ENCODE measurements at regions of chr3 and their contacts with region 1.

Region 1: GRCh38 chr3:58177747-58178527 is 32.8 kb downstream of the DNASE1L3 start:
- DNase-seq: peak; percentile 85 to 93
- H3K4me3 ChIP-seq: peak overlapping the region; percentile 39 to 56
- H3K27ac ChIP-seq: peak overlapping the region in 1 of 2 donors; percentile 2
- H3K4me1 ChIP-seq: peaks cover 0 to 35% (median 26%) of the 10 kb centered on the region in 4 donors
- H3K27me3 ChIP-seq: no peaks in the 10 kb centered on the region
- CTCF ChIP-seq: peak; percentile 91 to 93

Region 2: DNA sequence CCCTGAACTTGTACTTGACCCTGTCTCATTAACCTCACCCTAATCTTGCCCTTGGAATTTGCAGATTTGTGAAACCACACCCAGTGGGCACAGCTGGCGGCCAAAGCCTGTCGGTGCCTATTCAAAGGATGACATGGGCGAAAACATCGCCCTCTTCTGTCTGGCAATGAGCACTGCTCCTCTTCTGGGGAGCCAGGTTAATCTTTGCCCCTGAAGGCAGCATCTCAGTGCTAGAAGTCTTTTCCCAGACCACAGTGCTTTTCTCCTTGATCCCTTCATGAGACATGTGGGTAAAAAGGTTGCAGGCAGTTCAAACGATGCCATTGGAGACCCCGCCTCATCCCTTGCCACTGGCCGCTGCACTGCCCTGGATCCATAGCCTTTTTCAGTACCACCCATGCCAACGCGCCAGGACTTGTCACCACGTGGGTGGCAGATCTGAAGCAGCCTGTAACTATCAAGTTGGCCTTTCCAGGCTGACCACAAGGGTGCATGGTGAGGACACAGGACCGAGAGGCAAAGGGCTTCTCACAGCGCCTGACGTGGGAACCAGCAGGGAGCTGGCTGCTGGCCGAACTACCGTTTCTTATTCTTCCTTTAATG is 39.4 kb after region 1 on chr3:
- intact Hi-C with region 1: loop called (anchors 2 kb)
- DNase-seq: peak; percentile 77 to 85
- H3K4me3 ChIP-seq: no peak overlapping the region
- H3K27ac ChIP-seq: peak overlapping the region in 1 of 2 donors; percentile 13
- H3K4me1 ChIP-seq: peaks cover 0 to 10% (median 2%) of the 10 kb centered on the region in 4 donors
- H3K27me3 ChIP-seq: no peaks in the 10 kb centered on the region
- CTCF ChIP-seq: peak; percentile 70 to 76

Region 3: GRCh38 chr3:58249358-58250092 is 71.6 kb after region 1 on chr3:
- intact Hi-C with region 1: no loop called
- DNase-seq: no peak
- H3K4me3 ChIP-seq: no peak overlapping the region
- H3K27ac ChIP-seq: no peak overlapping the region
- H3K4me1 ChIP-seq: no peaks in the 10 kb centered on the region
- H3K27me3 ChIP-seq: no peaks in the 10 kb centered on the region
- CTCF ChIP-seq: no peak